Activated CD4-positive, alpha-beta T cell treated with anti-CD3 and anti-CD28 coated beads, Interleukin-2, amount 10 ng/mL, durations not matched to agents 24 days and 14 days (primary cell): ENCODE measurements at regions of chr14 and their contacts with region 1.

Region 1: GRCh38 chr14:67187210-67187609 is 2.0 kb upstream of the GARIN2 start:
- DNase-seq: no peak
- H3K4me3 Mint-ChIP-seq: no peak overlapping the region
- H3K27ac Mint-ChIP-seq: no peak overlapping the region
- H3K4me1 Mint-ChIP-seq: peaks cover 16% of the 10 kb centered on the region
- H3K27me3 Mint-ChIP-seq: no peaks in the 10 kb centered on the region

Region 2: DNA sequence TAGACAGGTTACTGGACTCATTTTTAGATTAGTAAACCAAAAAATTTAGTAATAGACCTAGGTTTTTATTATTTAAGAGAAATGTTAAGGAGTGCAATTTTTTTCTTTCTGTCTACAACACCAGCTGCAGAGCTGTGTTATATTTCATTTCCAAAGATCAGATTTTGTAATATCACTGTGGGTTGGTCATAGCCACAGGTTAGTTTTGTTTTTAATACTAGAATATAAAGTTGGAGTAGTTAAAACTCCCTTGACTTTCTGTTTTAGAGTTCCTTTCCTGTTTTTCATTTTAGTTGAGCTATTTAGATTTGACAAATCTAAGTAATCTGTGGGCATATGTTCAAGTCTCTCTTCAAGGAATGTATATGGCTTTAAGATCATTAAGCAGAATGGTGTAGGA is 28.6 kb before region 1 on chr14:
- intact Hi-C with region 1: loop called (anchors 1 kb)
- DNase-seq: no peak
- H3K4me3 Mint-ChIP-seq: no peak overlapping the region
- H3K27ac Mint-ChIP-seq: peak overlapping the region; percentile 15
- H3K4me1 Mint-ChIP-seq: peaks cover 12% of the 10 kb centered on the region
- H3K27me3 Mint-ChIP-seq: no peaks in the 10 kb centered on the region

Region 3: DNA sequence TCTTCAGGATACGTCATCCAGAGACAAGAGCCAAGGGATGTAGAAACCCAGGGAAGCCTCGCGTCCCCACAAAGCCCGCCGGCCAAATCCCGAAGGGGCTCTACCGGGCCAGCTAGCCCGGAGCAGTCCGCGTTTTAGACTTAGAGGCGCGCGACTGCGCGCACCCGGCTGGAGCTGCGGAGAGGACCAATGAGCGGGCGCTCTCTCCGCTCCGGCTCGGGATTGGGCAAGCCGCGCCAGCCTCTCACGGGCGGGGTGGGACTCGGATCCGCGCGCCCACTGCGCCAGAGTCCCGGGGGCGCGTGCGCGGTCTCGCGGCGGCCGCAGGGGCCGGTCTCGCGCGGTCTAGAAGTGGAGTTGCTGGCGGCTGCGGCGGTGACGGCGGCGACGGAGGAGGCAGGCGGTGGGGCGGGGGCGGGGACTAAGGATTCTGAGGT is 53.8 kb after region 1 on chr14:
- intact Hi-C with region 1: loop called (anchors 1 kb)
- DNase-seq: peak; percentile 98
- H3K4me3 Mint-ChIP-seq: peak overlapping the region; percentile 88
- H3K27ac Mint-ChIP-seq: peak overlapping the region; percentile 84
- H3K4me1 Mint-ChIP-seq: peaks cover 11% of the 10 kb centered on the region
- H3K27me3 Mint-ChIP-seq: peaks cover 24% of the 10 kb centered on the region

Region 4: GRCh38 chr14:67263499-67264149 is 76.4 kb after region 1 on chr14:
- intact Hi-C with region 1: no loop called
- DNase-seq: no peak
- H3K4me3 Mint-ChIP-seq: no peak overlapping the region
- H3K27ac Mint-ChIP-seq: no peak overlapping the region
- H3K4me1 Mint-ChIP-seq: peaks cover 7% of the 10 kb centered on the region
- H3K27me3 Mint-ChIP-seq: no peaks in the 10 kb centered on the region

Region 5: DNA sequence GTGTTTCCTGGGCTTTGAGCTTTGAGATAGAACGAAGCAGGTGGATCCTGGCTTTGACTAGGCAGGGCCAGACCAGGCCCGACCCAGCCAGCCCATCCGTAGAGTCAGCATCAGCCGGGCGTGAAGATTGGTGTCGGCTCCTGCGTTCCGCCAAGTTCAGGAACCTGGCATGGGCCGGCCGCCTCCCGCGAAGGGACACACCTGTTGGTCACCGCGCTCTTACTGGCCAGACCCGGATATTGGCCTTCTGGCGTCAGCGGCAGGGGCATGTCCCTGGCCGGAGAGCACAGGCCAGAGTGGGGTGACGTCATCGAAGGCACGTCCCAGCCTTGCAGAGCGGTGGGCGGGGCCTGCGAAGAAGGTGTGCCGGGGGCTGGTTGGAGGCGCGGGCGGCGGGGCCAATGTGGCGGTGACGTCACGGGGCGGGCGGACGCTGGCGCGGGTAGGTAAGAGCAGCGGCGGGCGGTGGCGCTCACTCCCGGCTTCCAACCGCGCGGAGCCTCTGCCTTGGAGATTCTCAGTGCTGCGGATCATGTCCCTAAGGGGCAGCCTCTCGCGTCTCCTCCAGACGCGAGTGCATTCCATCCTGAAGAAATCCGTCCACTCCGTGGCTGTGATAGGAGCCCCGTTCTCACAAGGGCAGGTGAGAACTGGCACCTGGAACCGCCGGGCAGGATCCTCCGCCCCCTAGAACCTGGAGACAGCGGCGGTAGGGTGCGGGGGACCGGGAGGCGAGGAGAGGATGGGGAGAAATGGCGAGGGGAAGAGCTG is 432.4 kb after region 1 on chr14 and contains the start of gene ARG2:
- intact Hi-C with region 1: no loop called
- DNase-seq: peak; percentile 99
- H3K4me3 Mint-ChIP-seq: peak within 1 kb of the TSS; percentile 92
- H3K27ac Mint-ChIP-seq: peak within 1 kb of the TSS; percentile 85
- H3K4me1 Mint-ChIP-seq: peaks cover 33% of the 10 kb centered on the region
- H3K27me3 Mint-ChIP-seq: peaks cover 15% of the 10 kb centered on the region
- total RNA-seq, gene ARG2: 4.7 and 5.0 TPM in 2 replicates